GM12878 (cell line): ENCODE measurements at regions of chr2 and their contacts with region 1.

Region 1: GRCh38 chr2:135997380-135997779 is 12.0 kb upstream of the DARS1 start:
- DNase-seq: no peak
- ATAC-seq: peak; percentile 82
- H3K4me3 ChIP-seq: no peak overlapping the region
- H3K27ac ChIP-seq: no peak overlapping the region
- H3K4me1 ChIP-seq: peaks cover 11% of the 10 kb centered on the region
- H3K27me3 ChIP-seq: no peaks in the 10 kb centered on the region
- CTCF ChIP-seq: peak; percentile 5 to 27 (median 7); a peak in 3 of 6 replicates
- EP300 ChIP-seq: no peak
- POLR2A ChIP-seq: no peak
- RAD21 ChIP-seq: peak; percentile 61

Region 2: GRCh38 chr2:136008205-136008865 is 11.0 kb after region 1 on chr2:
- CTCF ChIA-PET with region 1: interaction called, 42 read pairs
- POLR2A ChIA-PET with region 1: interaction called, 47 read pairs
- RAD21 ChIA-PET with region 1: interaction called, 14 read pairs
- SMC1A ChIA-PET with region 1: interaction called, 153 read pairs
- in situ Hi-C with region 1: no loop called
- intact Hi-C with region 1: no loop called
- DNase-seq: no peak
- ATAC-seq: peak; percentile 69
- H3K4me3 ChIP-seq: no peak overlapping the region
- H3K27ac ChIP-seq: no peak overlapping the region
- H3K4me1 ChIP-seq: peaks cover 9% of the 10 kb centered on the region
- H3K27me3 ChIP-seq: no peaks in the 10 kb centered on the region
- CTCF ChIP-seq: no peak
- EP300 ChIP-seq: peak in 1 of 2 experiments; percentile 33; a peak in 1 of 4 replicates
- POLR2A ChIP-seq: no peak
- RAD21 ChIP-seq: no peak

Region 3: GRCh38 chr2:136019306-136019705 is 21.9 kb after region 1 on chr2:
- CTCF ChIA-PET with region 1: interaction called, 23 read pairs
- POLR2A ChIA-PET with region 1: interaction called, 47 read pairs
- RAD21 ChIA-PET with region 1: interaction called, 19 read pairs
- SMC1A ChIA-PET with region 1: interaction called, 153 read pairs
- in situ Hi-C with region 1: no loop called
- intact Hi-C with region 1: no loop called
- DNase-seq: peak; percentile 40
- ATAC-seq: peak; percentile 78
- H3K4me3 ChIP-seq: no peak overlapping the region
- H3K27ac ChIP-seq: no peak overlapping the region
- H3K4me1 ChIP-seq: peaks cover 8% of the 10 kb centered on the region
- H3K27me3 ChIP-seq: no peaks in the 10 kb centered on the region
- CTCF ChIP-seq: no peak
- EP300 ChIP-seq: peak; percentile 78 to 87; a peak in 2 of 4 replicates
- POLR2A ChIP-seq: no peak
- RAD21 ChIP-seq: 0 out of 2 replicates have a peak, but pooled peaks have one; percentile 6

Region 4: DNA sequence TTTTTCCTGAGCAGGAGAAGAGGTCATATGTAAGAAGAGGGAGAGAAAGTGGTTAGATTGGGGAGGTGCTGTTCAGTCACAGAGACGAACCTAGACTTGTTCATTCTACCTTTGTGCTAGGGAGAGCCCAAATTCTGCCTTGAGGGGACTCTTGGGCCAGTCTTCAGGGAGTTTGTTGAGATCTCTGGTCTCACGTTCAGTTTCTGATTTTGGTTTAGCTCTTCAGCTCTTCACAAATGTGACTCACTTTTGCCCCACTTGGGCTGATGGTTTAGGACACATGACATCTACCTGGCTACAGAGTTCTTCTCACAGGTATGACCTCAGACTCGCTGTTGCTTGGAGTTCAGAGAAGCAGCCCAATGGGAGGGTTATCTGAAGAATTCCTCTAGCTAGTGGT is 37.2 kb after region 1 on chr2:
- CTCF ChIA-PET with region 1: interaction called, 5 read pairs
- POLR2A ChIA-PET with region 1: no interaction called
- RAD21 ChIA-PET with region 1: interaction called, 31 read pairs
- SMC1A ChIA-PET with region 1: interaction called, 38 read pairs
- in situ Hi-C with region 1: no loop called
- intact Hi-C with region 1: no loop called
- DNase-seq: no peak
- ATAC-seq: peak; percentile 78
- H3K4me3 ChIP-seq: no peak overlapping the region
- H3K27ac ChIP-seq: no peak overlapping the region
- H3K4me1 ChIP-seq: peaks cover under 1% of the 10 kb centered on the region; the same call in 1 of the 2 replicates
- H3K27me3 ChIP-seq: 0 out of 4 replicates have a peak, but pooled peaks cover 0 to 2% of the 10 kb centered on the region in 2 experiments
- CTCF ChIP-seq: no peak
- EP300 ChIP-seq: no peak
- POLR2A ChIP-seq: no peak
- RAD21 ChIP-seq: no peak

Region 5: DNA sequence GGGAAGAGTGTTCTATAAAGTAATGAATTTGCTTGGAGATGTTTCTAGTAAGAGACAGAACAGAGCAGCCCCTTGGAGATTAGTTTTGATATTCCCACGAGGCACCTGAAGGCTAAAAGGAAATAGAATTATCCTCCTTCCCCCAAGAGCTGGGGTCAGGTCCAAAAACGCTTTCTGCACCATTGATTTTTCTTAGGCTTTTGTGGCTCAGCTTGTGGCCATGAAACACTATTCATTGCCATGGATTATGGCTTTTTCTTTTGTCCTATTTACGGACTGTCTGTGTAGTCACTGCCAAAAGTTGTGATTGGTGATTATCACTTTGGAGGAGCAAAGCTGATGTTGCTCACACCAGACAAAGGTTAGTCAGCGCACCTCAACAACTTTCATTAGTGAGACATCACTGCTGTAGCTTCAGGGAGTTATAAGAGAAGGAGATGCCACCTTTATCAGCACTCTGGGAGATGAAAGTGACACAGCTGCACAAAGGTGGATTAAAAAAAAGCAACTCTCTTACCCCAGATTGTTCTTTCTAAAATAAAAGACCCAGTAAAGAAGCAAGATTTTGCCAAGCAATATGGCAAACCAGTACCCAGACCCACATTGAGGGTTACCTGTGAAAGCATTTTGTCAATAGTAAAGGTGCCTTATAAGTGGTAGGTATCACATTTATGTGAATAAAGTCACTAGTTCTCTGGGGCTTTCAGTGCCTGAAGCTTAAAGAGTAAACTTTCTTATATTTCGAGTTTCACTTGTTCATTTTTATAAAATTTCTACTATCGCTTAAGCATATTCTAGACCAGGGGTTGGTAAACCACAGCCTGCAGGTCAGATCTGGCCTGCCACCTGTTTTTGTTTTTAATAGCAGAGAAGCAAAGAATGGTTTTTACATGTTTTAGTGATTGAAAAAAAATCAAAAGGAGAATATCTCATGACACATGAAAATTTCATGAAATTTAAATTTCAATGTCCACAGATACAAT is 110.0 kb after region 1 on chr2:
- CTCF ChIA-PET with region 1: interaction called, 7 read pairs
- POLR2A ChIA-PET with region 1: interaction called, 3 read pairs
- RAD21 ChIA-PET with region 1: interaction called, 8 read pairs
- SMC1A ChIA-PET with region 1: interaction called, 14 read pairs
- in situ Hi-C with region 1: no loop called
- intact Hi-C with region 1: no loop called
- DNase-seq: no peak
- ATAC-seq: peak; percentile 68
- H3K4me3 ChIP-seq: no peak overlapping the region
- H3K27ac ChIP-seq: no peak overlapping the region
- H3K4me1 ChIP-seq: peaks cover 15% of the 10 kb centered on the region; the same call in 1 of the 2 replicates
- H3K27me3 ChIP-seq: no peaks in the 10 kb centered on the region
- CTCF ChIP-seq: no peak
- EP300 ChIP-seq: peak in 1 of 2 experiments; percentile 59; a peak in 2 of 4 replicates
- POLR2A ChIP-seq: no peak
- RAD21 ChIP-seq: no peak

Region 6: DNA sequence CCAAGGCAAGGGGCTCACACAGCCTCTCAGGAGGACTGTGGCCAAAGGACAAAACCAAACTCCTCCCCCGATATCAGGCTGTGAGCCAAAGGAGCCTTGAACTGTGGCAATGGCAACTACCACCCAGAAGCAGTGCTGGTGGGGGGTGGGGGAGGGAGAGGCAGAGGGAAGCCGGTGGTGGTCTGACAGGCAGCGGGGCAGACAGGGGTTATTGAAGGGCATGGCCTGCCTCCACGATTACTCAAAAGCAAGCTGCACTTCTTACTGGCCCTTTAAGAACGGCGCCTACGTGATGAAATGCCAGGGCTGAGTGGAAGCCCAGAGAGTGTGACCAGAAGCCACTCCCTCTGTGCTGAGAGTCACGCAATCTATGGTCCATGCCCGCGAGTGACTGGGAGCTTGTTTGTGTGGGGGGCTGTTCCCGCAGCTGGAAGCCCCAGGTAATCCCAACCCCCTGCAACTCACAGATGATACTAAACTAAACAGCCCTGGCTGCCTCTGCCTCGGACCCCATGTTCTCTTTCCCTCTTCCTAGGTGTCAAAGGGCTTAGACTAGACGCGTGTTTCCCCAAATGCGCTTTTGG is 248.8 kb after region 1 on chr2:
- CTCF ChIA-PET with region 1: no interaction called
- POLR2A ChIA-PET with region 1: no interaction called
- RAD21 ChIA-PET with region 1: interaction called, 11 read pairs
- SMC1A ChIA-PET with region 1: interaction called, 4 read pairs
- in situ Hi-C with region 1: no loop called
- intact Hi-C with region 1: no loop called
- DNase-seq: peak; percentile 60
- ATAC-seq: peak; percentile 96
- H3K4me3 ChIP-seq: no peak overlapping the region
- H3K27ac ChIP-seq: no peak overlapping the region; the same call in 1 of the 2 replicates
- H3K4me1 ChIP-seq: peaks cover 3% of the 10 kb centered on the region; the same call in 1 of the 2 replicates
- H3K27me3 ChIP-seq: 0 out of 4 replicates have a peak, but pooled peaks cover 0 to 2% of the 10 kb centered on the region in 2 experiments
- CTCF ChIP-seq: no peak
- EP300 ChIP-seq: peak; percentile 78 to 87; a peak in 3 of 4 replicates
- POLR2A ChIP-seq: no peak
- RAD21 ChIP-seq: no peak